CD8-positive, alpha-beta T cell (primary cell): ENCODE measurements at regions of chr3 and their contacts with region 1.

Region 1: GRCh38 chr3:71050538-71051258 is 532.8 kb downstream of the FOXP1 start:
- DNase-seq: peak in 6 of 9 experiments; percentile 14 to 85 (median 48)
- ATAC-seq: peak; percentile 93
- H3K4me3 ChIP-seq: no peak overlapping the region
- H3K4me3 Mint-ChIP-seq: peak overlapping the region; percentile 46
- H3K27ac ChIP-seq: peak overlapping the region; percentile 10 to 49
- H3K27ac Mint-ChIP-seq: peak overlapping the region; percentile 97
- H3K4me1 ChIP-seq: peaks cover 96% of the 10 kb centered on the region
- H3K4me1 Mint-ChIP-seq: peaks cover 100% of the 10 kb centered on the region
- H3K27me3 ChIP-seq: no peaks in the 10 kb centered on the region
- H3K27me3 Mint-ChIP-seq: no peaks in the 10 kb centered on the region
- CTCF ChIP-seq: no peak

Region 2: DNA sequence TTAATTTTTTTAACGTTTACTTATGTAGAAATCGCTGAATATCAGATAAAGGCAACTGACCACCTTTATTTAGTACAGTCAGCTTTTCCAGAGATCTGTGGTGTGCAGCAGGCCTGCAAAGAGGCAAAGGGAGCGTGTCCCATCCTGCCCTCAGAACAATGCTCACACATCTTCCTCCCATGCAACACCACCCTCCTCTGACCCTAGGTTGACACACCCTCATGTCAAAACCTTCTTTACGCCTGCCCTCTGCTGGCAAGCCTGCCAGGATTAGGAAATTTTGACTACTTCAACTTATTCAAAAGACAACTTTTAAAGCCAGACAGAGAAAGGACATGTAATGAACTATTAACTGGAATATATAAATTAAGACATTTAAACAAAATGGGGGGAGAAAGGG is 19.1 kb after region 1 on chr3:
- CTCF ChIA-PET with region 1: interaction called, 4 read pairs
- POLR2A ChIA-PET with region 1: interaction called, 7 read pairs
- intact Hi-C with region 1: loop called (anchors 2 kb)
- DNase-seq: peak; percentile 57 to 81 (median 72)
- ATAC-seq: peak; percentile 29
- H3K4me3 ChIP-seq: no peak overlapping the region
- H3K4me3 Mint-ChIP-seq: no peak overlapping the region
- H3K27ac ChIP-seq: no peak overlapping the region
- H3K27ac Mint-ChIP-seq: peak overlapping the region; percentile 91
- H3K4me1 ChIP-seq: peaks cover 89% of the 10 kb centered on the region
- H3K4me1 Mint-ChIP-seq: peaks cover 84% of the 10 kb centered on the region
- H3K27me3 ChIP-seq: no peaks in the 10 kb centered on the region
- H3K27me3 Mint-ChIP-seq: no peaks in the 10 kb centered on the region
- CTCF ChIP-seq: peak; percentile 67